Aorta (tissue), 5 donors: ENCODE measurements at regions of chr2 and their contacts with region 1.

Region 1: GRCh38 chr2:32168513-32168912 is 2.8 kb downstream of the SLC30A6 start:
- DNase-seq: no peak
- ATAC-seq: no peak
- H3K4me3 ChIP-seq: no peak overlapping the region
- H3K27ac ChIP-seq: no peak overlapping the region
- H3K4me1 ChIP-seq: no peaks in the 10 kb centered on the region
- H3K27me3 ChIP-seq: no peaks in the 10 kb centered on the region

Region 2: DNA sequence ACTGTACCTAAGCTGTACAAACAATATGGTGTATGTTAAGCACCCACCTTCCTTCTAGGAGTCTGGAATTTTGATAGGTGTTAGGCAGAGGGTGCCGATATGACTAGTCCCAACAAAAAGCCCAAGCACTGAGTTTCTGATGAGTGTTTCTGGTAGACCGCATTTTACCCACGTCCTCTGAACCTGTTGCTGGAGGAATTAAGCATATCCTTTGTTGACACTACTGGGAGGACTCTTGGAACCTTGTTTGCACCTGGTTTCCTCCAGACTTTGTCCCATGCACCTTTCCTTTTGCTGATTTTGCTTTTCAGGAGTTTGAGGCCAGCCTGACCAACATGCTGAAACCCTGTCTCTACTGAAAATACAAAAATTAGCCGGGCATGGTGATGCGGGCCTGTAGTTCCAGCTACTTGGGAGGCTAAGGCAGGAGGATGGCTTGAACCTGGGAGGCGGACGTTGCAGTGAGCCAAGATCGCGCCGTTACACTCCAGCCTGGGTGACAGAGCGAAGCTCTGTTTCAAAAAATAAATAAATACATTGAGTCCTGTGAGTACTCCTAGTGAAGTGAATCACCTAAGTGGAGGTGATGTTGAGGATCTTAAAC is 116.6 kb before region 1 on chr2:
- intact Hi-C with region 1: no loop called
- DNase-seq: no peak
- ATAC-seq: no peak
- H3K4me3 ChIP-seq: no peak overlapping the region
- H3K27ac ChIP-seq: no peak overlapping the region
- H3K4me1 ChIP-seq: no peaks in the 10 kb centered on the region
- H3K27me3 ChIP-seq: no peaks in the 10 kb centered on the region

Region 3: DNA sequence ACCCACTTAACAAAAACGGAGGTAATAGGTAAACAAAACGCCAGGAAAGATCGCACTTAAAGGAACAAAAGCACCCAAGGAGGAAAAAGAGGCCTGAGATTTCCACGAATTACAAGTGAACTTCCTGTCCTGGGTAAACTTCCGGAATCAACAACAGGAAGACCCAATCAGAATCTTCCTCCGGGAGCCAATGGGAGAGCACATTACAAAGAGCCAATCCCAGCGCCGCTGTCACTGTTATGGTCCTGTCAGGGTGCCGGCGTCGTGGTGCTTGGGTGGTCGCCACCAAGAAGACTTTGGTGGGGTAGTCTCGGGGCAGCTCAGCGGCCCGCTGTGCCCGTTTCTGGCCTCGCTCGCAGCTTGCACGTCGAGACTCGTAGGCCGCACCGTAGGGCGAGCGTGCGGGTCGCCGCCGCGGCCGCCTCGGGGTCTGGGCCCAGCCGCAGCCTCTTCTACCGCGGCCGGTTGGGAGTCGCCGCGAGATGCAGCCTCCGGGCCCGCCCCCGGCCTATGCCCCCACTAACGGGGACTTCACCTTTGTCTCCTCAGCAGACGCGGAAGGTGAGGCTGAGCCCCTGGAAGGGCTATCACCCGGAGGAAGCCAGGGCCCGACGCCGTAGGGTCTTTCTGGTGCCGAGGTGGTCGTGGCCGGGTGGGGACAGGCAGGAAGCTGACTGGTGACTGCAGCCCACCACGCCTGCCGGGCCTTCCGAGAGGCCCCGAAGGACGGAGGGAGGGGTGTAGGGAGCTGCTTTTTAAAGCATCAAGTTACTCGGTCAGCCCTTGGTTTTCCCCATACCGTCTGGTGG is 109.4 kb after region 1 on chr2 and contains the start of gene YIPF4:
- intact Hi-C with region 1: loop called in 1 of 2 experiments (anchors 2 kb)
- DNase-seq: peak; percentile 89 to 94
- ATAC-seq: peak; percentile 96
- H3K4me3 ChIP-seq: peak within 1 kb of the TSS; percentile 65 to 100
- H3K27ac ChIP-seq: peak within 1 kb of the TSS; percentile 12 to 78
- H3K4me1 ChIP-seq: peaks cover 0 to 1% of the 10 kb centered on the region in 2 donors
- H3K27me3 ChIP-seq: no peaks in the 10 kb centered on the region
- total RNA-seq, gene YIPF4: 35.4 to 57.9 TPM